Activated CD8-positive, alpha-beta memory T cell treated with anti-CD3 and anti-CD28 coated beads, Interleukin-2, amount 10 ng/mL, durations not matched to agents 7 days and 5 days (primary cell): ENCODE measurements at regions of chr3 and their contacts with region 1.

Region 1: DNA sequence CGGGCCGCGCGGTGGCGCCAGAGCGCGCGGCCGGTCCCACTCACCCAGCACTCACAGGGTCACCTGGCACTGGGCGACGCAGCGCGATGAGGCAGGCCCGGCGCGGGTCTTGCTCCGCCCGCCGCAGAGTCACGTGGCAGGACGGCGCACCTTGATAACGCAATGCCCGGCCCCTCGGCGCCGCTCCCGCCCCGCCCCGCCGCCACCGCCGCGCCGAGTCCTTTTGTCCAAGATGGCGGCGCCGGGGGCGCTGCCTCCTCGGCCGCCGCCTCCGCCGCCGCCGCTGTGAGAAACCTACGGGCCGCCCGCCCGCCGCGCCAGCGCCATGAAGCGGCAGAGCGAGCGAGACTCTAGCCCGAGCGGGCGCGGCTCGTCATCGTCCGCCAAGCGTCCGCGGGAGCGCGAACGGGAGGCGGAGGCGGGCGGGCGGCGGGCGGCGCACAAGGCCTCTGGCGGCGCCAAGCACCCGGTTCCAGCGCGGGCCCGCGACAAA is at the start of gene RBM15B:
- DNase-seq: peak; percentile 98
- ATAC-seq: peak; percentile 93
- H3K4me3 Mint-ChIP-seq: peak within 1 kb of the TSS; percentile 85
- H3K27ac Mint-ChIP-seq: peak within 1 kb of the TSS; percentile 88
- H3K4me1 Mint-ChIP-seq: peaks cover 82% of the 10 kb centered on the region
- H3K27me3 Mint-ChIP-seq: no peaks in the 10 kb centered on the region
- total RNA-seq, gene RBM15B: 28.7 to 36.1 TPM

Region 2: DNA sequence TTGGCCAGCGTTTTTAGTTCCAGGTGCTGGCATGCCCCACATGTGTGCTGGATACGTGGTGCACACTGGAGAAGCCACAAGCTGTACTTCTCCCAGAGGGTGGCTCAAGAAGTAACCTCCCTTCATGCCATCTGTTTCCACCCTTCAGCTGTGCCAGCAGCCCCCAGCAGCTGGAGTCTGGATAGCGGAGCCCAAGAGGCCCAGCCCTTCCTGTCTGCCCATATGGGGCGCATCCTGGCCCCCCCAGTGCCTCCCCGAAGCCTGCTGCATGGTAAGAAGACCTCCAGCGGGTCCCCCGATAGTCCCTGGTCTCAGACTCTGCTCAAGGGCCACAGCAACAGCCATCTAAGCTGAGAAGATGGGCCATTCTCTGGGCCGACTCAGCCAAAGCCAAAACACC is 11.8 kb before region 1 on chr3:
- CTCF ChIA-PET with region 1: interaction called, 14 read pairs
- DNase-seq: no peak
- ATAC-seq: no peak
- H3K4me3 Mint-ChIP-seq: no peak overlapping the region
- H3K27ac Mint-ChIP-seq: no peak overlapping the region
- H3K4me1 Mint-ChIP-seq: peaks cover 22% of the 10 kb centered on the region
- H3K27me3 Mint-ChIP-seq: no peaks in the 10 kb centered on the region

Region 3: GRCh38 chr3:51434746-51435327 is 43.7 kb after region 1 on chr3:
- CTCF ChIA-PET with region 1: interaction called, 13 read pairs
- DNase-seq: peak; percentile 64
- ATAC-seq: peak; percentile 89
- H3K4me3 Mint-ChIP-seq: no peak overlapping the region
- H3K27ac Mint-ChIP-seq: no peak overlapping the region
- H3K4me1 Mint-ChIP-seq: peaks cover 3% of the 10 kb centered on the region
- H3K27me3 Mint-ChIP-seq: no peaks in the 10 kb centered on the region

Region 4: GRCh38 chr3:51498876-51499738 is 108.0 kb after region 1 on chr3:
- CTCF ChIA-PET with region 1: interaction called, 39 read pairs
- DNase-seq: peak; percentile 93
- ATAC-seq: peak; percentile 73
- H3K4me3 Mint-ChIP-seq: peak overlapping the region; percentile 99
- H3K27ac Mint-ChIP-seq: peak overlapping the region; percentile 92
- H3K4me1 Mint-ChIP-seq: peaks cover 25% of the 10 kb centered on the region
- H3K27me3 Mint-ChIP-seq: no peaks in the 10 kb centered on the region

Region 5: DNA sequence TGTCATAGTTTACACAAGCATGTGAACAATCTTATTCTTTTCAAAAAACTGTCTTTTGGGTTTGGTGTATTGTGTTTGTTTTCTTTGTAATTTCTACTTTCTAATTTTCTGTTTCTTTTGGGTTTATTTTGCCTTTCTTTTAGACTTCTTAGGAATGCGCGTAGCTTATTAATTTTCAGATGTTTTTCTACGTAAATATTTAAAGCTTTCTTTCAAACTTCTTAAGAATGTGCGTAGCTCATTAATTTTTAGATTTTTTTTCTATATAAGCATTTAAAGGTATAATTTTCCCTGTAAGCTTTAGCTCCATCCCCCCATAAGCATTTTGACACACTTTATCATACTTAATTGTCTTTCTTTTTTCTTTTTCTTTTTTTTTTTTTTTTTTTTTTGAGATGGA is 202.6 kb after region 1 on chr3:
- CTCF ChIA-PET with region 1: no interaction called
- DNase-seq: no peak
- ATAC-seq: no peak
- H3K4me3 Mint-ChIP-seq: no peak overlapping the region
- H3K27ac Mint-ChIP-seq: no peak overlapping the region
- H3K4me1 Mint-ChIP-seq: peaks cover 3% of the 10 kb centered on the region
- H3K27me3 Mint-ChIP-seq: no peaks in the 10 kb centered on the region